ENCODE measurements at regions of chr3 and their contacts with region 1.

Region 1: GRCh38 chr3:146189519-146190173 is 28.7 kb upstream of the PLOD2 start:
- DNase-seq: no peak
- ATAC-seq: peak; percentile 95
- H3K4me3 ChIP-seq: no peak overlapping the region
- H3K27ac ChIP-seq: no peak overlapping the region
- H3K4me1 ChIP-seq: no peaks in the 10 kb centered on the region
- H3K27me3 ChIP-seq: no peaks in the 10 kb centered on the region
- CTCF ChIP-seq: peak; percentile 67 to 73 (median 72)
- EP300 ChIP-seq: no peak
- POLR2A ChIP-seq: no peak
- RAD21 ChIP-seq: peak; percentile 69

Region 2: DNA sequence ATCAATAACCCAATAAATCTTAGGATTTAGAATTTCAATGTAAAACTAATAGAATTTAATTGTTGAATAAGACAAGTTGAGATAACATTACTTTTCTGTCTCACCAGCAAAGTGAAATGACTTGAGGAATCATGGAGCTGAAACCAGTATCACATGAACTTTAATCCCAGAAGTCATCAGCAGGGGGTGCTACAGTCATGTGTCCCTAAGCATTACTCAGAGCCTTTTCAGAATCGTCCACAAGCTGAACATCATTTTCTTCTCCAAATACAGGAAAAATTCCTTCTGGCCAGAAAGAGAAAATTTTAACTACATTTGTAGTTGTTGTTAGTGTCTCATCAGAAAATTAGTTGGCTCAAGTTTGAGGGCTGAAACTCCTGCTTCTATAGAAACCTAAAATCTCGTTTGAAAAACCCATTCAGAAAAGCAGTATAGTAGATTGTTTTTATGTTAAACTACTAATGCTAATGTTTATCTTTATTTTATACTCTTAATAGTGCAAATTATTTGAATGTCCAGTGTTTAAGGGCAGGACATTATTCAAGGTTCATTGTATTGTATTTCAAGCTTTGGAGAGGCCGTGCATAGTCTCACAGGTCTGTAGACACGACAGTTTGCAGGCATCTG is 412.8 kb before region 1 on chr3:
- CTCF ChIA-PET with region 1: interaction called, 19 read pairs
- POLR2A ChIA-PET with region 1: no interaction called
- RAD21 ChIA-PET with region 1: interaction called, 9 read pairs
- SMC1A ChIA-PET with region 1: interaction called, 13 read pairs
- in situ Hi-C with region 1: loop called (anchors 25 kb)
- intact Hi-C with region 1: loop called (anchors 2 kb)
- DNase-seq: peak; percentile 16
- ATAC-seq: peak; percentile 90
- H3K4me3 ChIP-seq: no peak overlapping the region
- H3K27ac ChIP-seq: no peak overlapping the region
- H3K4me1 ChIP-seq: no peaks in the 10 kb centered on the region
- H3K27me3 ChIP-seq: no peaks in the 10 kb centered on the region
- CTCF ChIP-seq: peak; percentile 57 to 75 (median 60); a peak in 5 of 6 replicates
- EP300 ChIP-seq: no peak
- POLR2A ChIP-seq: no peak
- RAD21 ChIP-seq: peak; percentile 59

Region 3: GRCh38 chr3:146044046-146044445 is 145.6 kb before region 1 on chr3:
- CTCF ChIA-PET with region 1: no interaction called
- POLR2A ChIA-PET with region 1: no interaction called
- RAD21 ChIA-PET with region 1: no interaction called
- SMC1A ChIA-PET with region 1: no interaction called
- in situ Hi-C with region 1: no loop called
- intact Hi-C with region 1: no loop called
- DNase-seq: no peak
- ATAC-seq: no peak
- H3K4me3 ChIP-seq: no peak overlapping the region
- H3K27ac ChIP-seq: no peak overlapping the region
- H3K4me1 ChIP-seq: no peaks in the 10 kb centered on the region
- H3K27me3 ChIP-seq: no peaks in the 10 kb centered on the region
- CTCF ChIP-seq: no peak
- EP300 ChIP-seq: no peak
- POLR2A ChIP-seq: no peak
- RAD21 ChIP-seq: no peak

Region 4: DNA sequence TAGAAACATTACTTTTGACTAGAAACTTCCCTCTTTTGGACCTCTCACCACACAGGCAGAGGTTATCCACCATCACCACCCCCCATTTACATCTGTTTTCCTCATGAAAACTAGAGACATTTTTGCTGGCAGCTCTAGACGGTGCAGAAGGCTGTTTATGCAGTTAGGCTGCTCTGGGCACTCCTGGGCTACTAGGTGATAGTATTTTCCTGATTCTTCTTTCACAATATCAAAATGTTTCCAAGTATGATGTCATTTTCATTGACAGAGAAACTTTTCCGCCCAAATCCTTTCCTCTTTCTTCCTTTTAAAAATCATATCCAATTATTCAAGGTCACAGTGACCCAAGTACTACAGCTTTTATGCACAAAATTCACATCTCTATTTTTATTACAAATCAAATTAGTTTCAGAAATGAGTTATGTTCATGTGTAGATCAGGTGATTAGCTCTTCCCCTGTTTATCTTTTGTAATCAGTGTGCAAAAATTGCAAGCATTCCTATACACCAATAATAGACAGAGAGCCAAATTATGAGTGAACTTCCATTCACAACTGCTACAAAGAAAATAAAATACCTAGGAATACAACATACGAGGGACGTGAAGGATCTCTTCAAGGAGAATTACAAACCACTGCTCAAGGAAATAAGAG is 95.6 kb before region 1 on chr3:
- CTCF ChIA-PET with region 1: no interaction called
- POLR2A ChIA-PET with region 1: no interaction called
- RAD21 ChIA-PET with region 1: no interaction called
- SMC1A ChIA-PET with region 1: no interaction called
- in situ Hi-C with region 1: no loop called
- intact Hi-C with region 1: no loop called
- DNase-seq: no peak
- ATAC-seq: no peak
- H3K4me3 ChIP-seq: no peak overlapping the region
- H3K27ac ChIP-seq: no peak overlapping the region
- H3K4me1 ChIP-seq: no peaks in the 10 kb centered on the region
- H3K27me3 ChIP-seq: no peaks in the 10 kb centered on the region
- CTCF ChIP-seq: no peak
- EP300 ChIP-seq: no peak
- POLR2A ChIP-seq: no peak
- RAD21 ChIP-seq: no peak

Region 5: DNA sequence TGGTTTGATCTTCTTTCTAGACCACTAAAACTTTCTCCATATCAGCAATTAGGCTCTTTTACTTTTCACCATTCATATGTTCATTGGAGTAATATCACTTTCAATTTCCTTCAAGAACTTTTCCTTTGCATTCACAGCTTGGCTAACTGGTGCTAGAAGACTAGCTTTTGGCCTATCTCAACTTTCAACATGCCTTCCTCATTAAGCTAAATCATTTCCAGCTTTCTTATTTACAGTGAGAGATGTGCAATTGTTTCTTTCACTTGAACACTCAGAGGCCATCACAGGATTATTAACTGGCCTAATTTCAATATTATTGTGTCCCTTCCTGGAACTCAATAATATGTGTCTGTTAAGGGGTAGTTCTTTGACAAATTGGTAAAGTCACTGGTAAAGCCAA is 14.1 kb after region 1 on chr3:
- CTCF ChIA-PET with region 1: interaction called, 13 read pairs
- POLR2A ChIA-PET with region 1: no interaction called
- RAD21 ChIA-PET with region 1: no interaction called
- SMC1A ChIA-PET with region 1: interaction called, 8 read pairs
- in situ Hi-C with region 1: no loop called
- intact Hi-C with region 1: no loop called
- DNase-seq: no peak
- ATAC-seq: no peak
- H3K4me3 ChIP-seq: no peak overlapping the region
- H3K27ac ChIP-seq: no peak overlapping the region
- H3K4me1 ChIP-seq: no peaks in the 10 kb centered on the region
- H3K27me3 ChIP-seq: no peaks in the 10 kb centered on the region
- CTCF ChIP-seq: no peak
- EP300 ChIP-seq: no peak
- POLR2A ChIP-seq: no peak
- RAD21 ChIP-seq: no peak

Region 6: DNA sequence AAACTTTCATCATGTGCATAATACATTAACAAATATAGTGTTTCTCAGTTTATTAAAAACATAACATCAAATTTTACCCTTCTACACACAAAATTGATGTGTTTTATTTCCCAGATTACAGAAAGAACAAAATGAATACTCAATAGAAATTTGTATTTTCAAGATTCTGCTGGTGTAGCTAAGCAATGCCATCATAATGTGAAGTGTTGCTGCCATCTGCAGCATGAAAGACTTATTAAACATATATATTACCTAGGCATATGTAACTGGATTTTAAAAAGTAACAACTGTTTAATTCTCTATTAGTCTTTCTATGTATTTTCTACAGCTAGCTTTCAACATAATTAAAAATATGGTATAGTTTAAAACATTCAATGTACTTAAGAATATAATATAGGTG is 388.0 kb after region 1 on chr3:
- CTCF ChIA-PET with region 1: interaction called, 57 read pairs
- POLR2A ChIA-PET with region 1: no interaction called
- RAD21 ChIA-PET with region 1: interaction called, 26 read pairs
- SMC1A ChIA-PET with region 1: interaction called, 14 read pairs
- in situ Hi-C with region 1: no loop called
- intact Hi-C with region 1: no loop called
- DNase-seq: no peak
- ATAC-seq: peak; percentile 70
- H3K4me3 ChIP-seq: no peak overlapping the region
- H3K27ac ChIP-seq: no peak overlapping the region
- H3K4me1 ChIP-seq: no peaks in the 10 kb centered on the region
- H3K27me3 ChIP-seq: no peaks in the 10 kb centered on the region
- CTCF ChIP-seq: peak; percentile 9 to 59 (median 19); a peak in 3 of 6 replicates
- EP300 ChIP-seq: no peak
- POLR2A ChIP-seq: no peak
- RAD21 ChIP-seq: peak; percentile 78

Region 7: DNA sequence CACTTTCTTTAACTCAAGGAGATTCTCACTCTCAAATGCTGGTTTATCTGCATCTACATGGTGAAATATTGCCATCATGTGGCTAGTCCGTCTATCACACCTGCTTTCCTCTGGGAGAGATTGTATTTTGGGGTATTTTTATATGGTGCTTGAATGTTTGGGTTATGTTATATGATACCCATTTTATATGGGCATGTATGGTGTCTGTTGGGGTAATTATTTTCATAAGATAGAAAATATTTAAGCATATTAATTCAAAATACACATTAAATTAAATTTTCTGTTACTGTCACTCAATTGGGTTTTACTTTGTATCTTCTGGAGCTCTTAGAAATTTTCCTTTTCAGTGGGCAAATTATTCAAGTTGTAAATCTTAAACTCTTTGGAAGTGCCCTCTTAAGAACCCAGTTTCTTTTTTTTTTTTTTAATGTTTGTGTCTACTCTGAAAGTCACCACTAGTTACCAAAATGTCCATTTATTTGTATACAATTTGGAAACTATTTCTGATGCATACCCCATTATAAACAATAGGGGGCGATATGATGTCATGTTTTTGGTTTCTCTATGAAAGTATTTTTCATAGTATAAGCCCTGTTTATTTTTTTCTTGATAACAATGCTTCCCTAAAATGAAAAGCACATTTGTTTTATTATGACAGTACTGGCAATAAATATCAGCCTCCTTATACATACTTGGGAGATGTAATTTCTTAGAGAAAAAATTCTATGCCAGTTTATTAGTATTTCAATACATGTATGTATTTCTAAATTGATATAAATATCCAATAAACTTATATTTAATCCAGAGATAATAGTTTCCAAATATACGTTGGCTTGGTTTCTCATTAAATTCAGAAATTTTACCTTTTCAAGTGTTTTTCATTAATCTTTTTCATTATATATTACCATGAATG is 451.6 kb after region 1 on chr3:
- CTCF ChIA-PET with region 1: interaction called, 25 read pairs
- POLR2A ChIA-PET with region 1: no interaction called
- RAD21 ChIA-PET with region 1: interaction called, 6 read pairs
- SMC1A ChIA-PET with region 1: interaction called, 8 read pairs
- in situ Hi-C with region 1: no loop called
- intact Hi-C with region 1: no loop called
- DNase-seq: no peak
- ATAC-seq: peak; percentile 91
- H3K4me3 ChIP-seq: no peak overlapping the region
- H3K27ac ChIP-seq: no peak overlapping the region
- H3K4me1 ChIP-seq: no peaks in the 10 kb centered on the region
- H3K27me3 ChIP-seq: no peaks in the 10 kb centered on the region
- CTCF ChIP-seq: peak; percentile 46 to 60 (median 49); a peak in 5 of 6 replicates
- EP300 ChIP-seq: no peak
- POLR2A ChIP-seq: no peak
- RAD21 ChIP-seq: peak; percentile 80

Measured in GM12878 (cell line).